Common myeloid progenitor, CD34-positive (primary cell): ENCODE measurements at regions of chr4 and their contacts with region 1.

Region 1: DNA sequence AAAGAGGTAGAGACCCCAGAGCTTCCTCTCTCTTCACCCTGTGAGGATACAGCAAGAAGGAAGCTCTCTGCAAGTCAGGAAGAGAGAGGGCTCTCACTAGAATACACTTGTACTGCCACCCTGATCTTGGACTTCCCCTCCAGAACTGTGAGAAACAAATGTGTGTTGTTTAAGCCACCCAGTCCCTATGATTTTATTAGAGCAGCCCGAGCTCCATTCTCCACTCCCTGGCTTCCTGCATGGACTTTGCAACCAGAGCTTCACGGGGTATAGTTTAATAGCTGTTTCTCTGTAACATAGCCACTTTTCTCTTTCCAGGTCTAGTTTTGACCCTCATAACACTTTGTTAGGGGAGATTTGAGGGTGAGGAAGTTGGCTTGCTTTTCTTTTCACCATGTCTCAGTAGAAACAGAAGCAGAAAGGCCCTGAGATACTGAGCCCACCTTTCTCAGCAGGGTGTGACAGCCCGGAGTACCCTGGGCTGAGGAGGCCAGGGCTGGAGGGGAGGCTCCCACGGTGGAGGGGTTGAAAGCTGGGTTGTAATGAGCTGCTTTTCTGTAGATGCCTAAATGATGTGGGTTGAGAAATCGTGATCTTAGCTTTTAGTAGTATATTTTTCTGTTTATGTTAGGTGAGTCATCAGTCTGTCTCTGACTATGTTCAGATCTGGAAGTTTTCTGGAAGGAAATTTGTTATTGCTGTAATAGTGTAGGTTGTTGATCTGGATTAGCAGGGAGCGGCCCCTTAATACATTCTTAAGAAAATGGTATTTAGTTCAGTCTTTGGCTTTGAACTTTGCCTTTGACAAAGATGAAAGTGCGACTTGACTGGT is 118.6 kb downstream of the PTTG2 start:
- DNase-seq: peak in 2 of 3 donors; percentile 17 to 26
- H3K4me3 ChIP-seq: peak overlapping the region in 1 of 7 experiments; percentile 19
- H3K27ac ChIP-seq: peak overlapping the region in 1 of 2 experiments; percentile 7
- H3K4me1 ChIP-seq: peaks cover 15 to 47% (median 41%) of the 10 kb centered on the region in 4 experiments
- H3K27me3 ChIP-seq: no peaks in the 10 kb centered on the region

Region 2: DNA sequence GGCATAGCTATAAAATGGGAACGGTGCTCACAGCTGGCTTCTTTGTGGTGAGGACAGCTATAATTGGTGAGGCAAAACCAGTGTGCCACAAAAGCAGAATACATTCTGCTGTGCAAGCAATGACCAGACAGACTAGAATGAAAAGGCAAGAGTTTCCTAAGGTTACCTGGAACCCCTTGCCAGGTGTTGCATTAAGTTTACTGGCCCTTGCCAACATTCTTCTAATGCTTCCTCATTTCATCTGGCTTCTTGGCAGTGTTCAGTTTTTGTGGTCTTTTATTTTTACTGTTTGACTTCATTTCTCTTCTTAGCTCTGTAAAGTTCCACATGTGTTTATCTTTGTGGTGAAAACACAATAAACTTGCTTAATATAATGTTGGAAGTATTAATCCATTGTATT is 12.8 kb after region 1 on chr4:
- CTCF ChIA-PET with region 1: interaction called, 28 read pairs
- POLR2A ChIA-PET with region 1: interaction called, 4 read pairs
- DNase-seq: peak in 2 of 3 donors; percentile 78 to 90
- H3K4me3 ChIP-seq: peak overlapping the region in 1 of 7 experiments; percentile 6
- H3K27ac ChIP-seq: no peak overlapping the region
- H3K4me1 ChIP-seq: peaks cover 7 to 53% (median 35%) of the 10 kb centered on the region in 4 experiments
- H3K27me3 ChIP-seq: no peaks in the 10 kb centered on the region

Region 3: DNA sequence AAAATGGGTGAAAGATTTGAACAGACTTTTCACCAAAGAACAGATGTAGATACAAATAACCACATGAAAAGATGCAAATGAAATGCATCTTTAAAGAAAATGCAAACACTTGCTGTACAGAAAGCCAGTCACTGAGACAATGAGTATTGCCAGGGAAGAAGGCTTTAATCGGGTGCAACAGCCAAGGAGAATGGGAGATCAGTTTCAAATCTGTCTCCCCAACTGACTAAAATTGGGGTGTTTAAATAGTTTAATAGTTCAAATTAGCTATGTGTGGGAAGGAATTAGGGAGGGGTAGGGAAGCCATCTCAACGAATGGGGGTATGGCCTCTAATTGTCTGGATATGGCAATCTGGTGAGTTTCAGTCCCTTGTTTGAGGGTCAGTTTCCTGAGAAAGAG is 176.8 kb after region 1 on chr4:
- CTCF ChIA-PET with region 1: no interaction called
- POLR2A ChIA-PET with region 1: no interaction called
- DNase-seq: no peak
- H3K4me3 ChIP-seq: no peak overlapping the region
- H3K27ac ChIP-seq: no peak overlapping the region
- H3K4me1 ChIP-seq: no peaks in the 10 kb centered on the region
- H3K27me3 ChIP-seq: no peaks in the 10 kb centered on the region